ENCODE measurements at regions of chr6 and their contacts with region 1.

Region 1: DNA sequence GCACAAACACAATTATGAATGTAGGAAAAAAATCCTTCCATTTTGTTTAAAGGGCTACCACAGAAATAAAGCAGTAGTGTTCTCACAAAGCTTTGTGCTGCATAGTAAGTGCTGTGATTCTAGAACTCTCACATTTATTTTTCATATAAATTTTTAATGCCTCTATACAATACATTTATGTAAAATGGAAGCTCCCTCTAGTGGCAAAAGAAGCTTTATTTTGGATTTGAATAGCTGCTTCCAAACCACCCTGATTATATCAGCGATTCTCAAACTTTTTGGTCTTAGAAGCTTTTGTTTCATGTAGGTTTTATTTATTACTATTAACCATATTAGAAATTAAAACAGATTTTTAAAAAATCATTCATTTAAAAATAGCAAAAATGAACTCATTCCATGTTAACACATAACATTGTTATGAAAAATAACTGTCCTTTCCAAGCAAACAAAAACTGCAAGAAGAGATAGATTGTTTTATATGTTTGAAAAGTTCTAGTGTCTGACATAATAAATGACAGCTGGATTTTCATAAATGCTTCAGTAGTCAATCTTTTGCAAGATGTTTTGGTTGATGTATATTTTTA is 38.4 kb downstream of the HS3ST5 start:
- DNase-seq: no peak
- ATAC-seq: no peak
- H3K4me3 ChIP-seq: no peak overlapping the region
- H3K27ac ChIP-seq: no peak overlapping the region
- H3K4me1 ChIP-seq: no peaks in the 10 kb centered on the region
- H3K27me3 ChIP-seq: no peaks in the 10 kb centered on the region
- CTCF ChIP-seq: peak in 2 of 4 donors; percentile 31 to 39

Region 2: GRCh38 chr6:114096561-114097172 is 207.7 kb before region 1 on chr6:
- intact Hi-C with region 1: loop called in 2 of 3 experiments (anchors 10 kb)
- DNase-seq: no peak
- ATAC-seq: peak in 3 of 4 donors; percentile 38 to 68 (median 54)
- H3K4me3 ChIP-seq: no peak overlapping the region
- H3K27ac ChIP-seq: no peak overlapping the region
- H3K4me1 ChIP-seq: no peaks in the 10 kb centered on the region
- H3K27me3 ChIP-seq: no peaks in the 10 kb centered on the region
- CTCF ChIP-seq: peak; percentile 52 to 85 (median 68)

Region 3: DNA sequence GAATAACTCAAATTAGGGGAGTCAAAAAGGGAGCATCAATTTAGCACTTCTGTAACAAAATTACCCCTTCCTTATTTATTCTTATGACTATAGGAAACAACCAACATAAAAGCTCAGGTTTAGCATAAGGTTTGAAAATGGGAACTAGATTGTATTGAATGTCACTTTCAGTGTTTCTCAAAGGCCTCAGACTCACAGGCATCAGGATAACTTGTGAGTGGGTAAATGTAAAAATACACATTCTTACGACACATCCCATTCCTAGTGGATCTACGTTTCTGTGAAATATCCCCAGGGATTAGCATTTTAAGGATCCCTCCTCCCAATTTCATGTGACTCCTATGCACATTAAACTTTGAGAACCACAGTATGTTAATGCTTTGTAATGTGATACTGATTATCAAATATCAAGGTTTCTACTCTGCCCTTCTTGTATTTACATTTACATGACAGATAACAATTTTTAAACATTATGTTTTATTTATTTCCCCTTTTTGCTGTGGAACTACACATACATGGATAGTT is 76.4 kb before region 1 on chr6:
- intact Hi-C with region 1: no loop called
- DNase-seq: no peak
- ATAC-seq: no peak
- H3K4me3 ChIP-seq: no peak overlapping the region
- H3K27ac ChIP-seq: no peak overlapping the region
- H3K4me1 ChIP-seq: no peaks in the 10 kb centered on the region
- H3K27me3 ChIP-seq: no peaks in the 10 kb centered on the region
- CTCF ChIP-seq: no peak

Measured in pancreas (tissue), 10 donors.